ENCODE measurements at regions of chr7 and their contacts with region 1.

Region 1: GRCh38 chr7:64366921-64367320 is 53.2 kb downstream of the ZNF736 start:
- DNase-seq: no peak
- H3K4me3 ChIP-seq: no peak overlapping the region
- H3K27ac ChIP-seq: no peak overlapping the region
- H3K4me1 ChIP-seq: no peaks in the 10 kb centered on the region
- H3K27me3 ChIP-seq: no peaks in the 10 kb centered on the region
- CTCF ChIP-seq: no peak

Region 2: GRCh38 chr7:64078699-64078994 is 288.3 kb before region 1 on chr7:
- intact Hi-C with region 1: no loop called
- DNase-seq: no peak
- H3K4me3 ChIP-seq: no peak overlapping the region
- H3K27ac ChIP-seq: no peak overlapping the region
- H3K4me1 ChIP-seq: no peaks in the 10 kb centered on the region
- H3K27me3 ChIP-seq: no peaks in the 10 kb centered on the region
- CTCF ChIP-seq: no peak

Region 3: GRCh38 chr7:64429232-64429631 is 62.3 kb after region 1 on chr7:
- intact Hi-C with region 1: loop called (anchors 10 kb)
- DNase-seq: no peak
- H3K4me3 ChIP-seq: no peak overlapping the region
- H3K27ac ChIP-seq: no peak overlapping the region
- H3K4me1 ChIP-seq: no peaks in the 10 kb centered on the region
- H3K27me3 ChIP-seq: no peaks in the 10 kb centered on the region
- CTCF ChIP-seq: no peak

Measured in tibial artery (tissue), 4 donors.